ENCODE measurements at regions of chr15 and their contacts with region 1.

Region 1: GRCh38 chr15:57527382-57528091 is 64.2 kb upstream of the MYZAP start:
- DNase-seq: peak; percentile 13
- H3K4me3 Mint-ChIP-seq: no peak overlapping the region
- H3K27ac Mint-ChIP-seq: no peak overlapping the region
- H3K4me1 Mint-ChIP-seq: no peaks in the 10 kb centered on the region
- H3K27me3 Mint-ChIP-seq: no peaks in the 10 kb centered on the region

Region 2: GRCh38 chr15:56496635-56497034 is 1030.9 kb before region 1 on chr15:
- CTCF ChIA-PET with region 1: interaction called, 4 read pairs
- intact Hi-C with region 1: loop called (anchors 5 kb)
- DNase-seq: no peak
- H3K4me3 Mint-ChIP-seq: no peak overlapping the region
- H3K27ac Mint-ChIP-seq: no peak overlapping the region
- H3K4me1 Mint-ChIP-seq: peaks cover 1% of the 10 kb centered on the region
- H3K27me3 Mint-ChIP-seq: peaks cover 15% of the 10 kb centered on the region

Region 3: GRCh38 chr15:56821721-56822425 is 705.7 kb before region 1 on chr15:
- CTCF ChIA-PET with region 1: no interaction called
- intact Hi-C with region 1: loop called (anchors 5 kb)
- DNase-seq: peak; percentile 61
- H3K4me3 Mint-ChIP-seq: no peak overlapping the region
- H3K27ac Mint-ChIP-seq: no peak overlapping the region
- H3K4me1 Mint-ChIP-seq: no peaks in the 10 kb centered on the region
- H3K27me3 Mint-ChIP-seq: no peaks in the 10 kb centered on the region

Region 4: GRCh38 chr15:57146506-57147201 is 380.9 kb before region 1 on chr15:
- CTCF ChIA-PET with region 1: no interaction called
- intact Hi-C with region 1: loop called (anchors 1 kb)
- DNase-seq: no peak
- H3K4me3 Mint-ChIP-seq: no peak overlapping the region
- H3K27ac Mint-ChIP-seq: no peak overlapping the region
- H3K4me1 Mint-ChIP-seq: peaks cover 6% of the 10 kb centered on the region
- H3K27me3 Mint-ChIP-seq: no peaks in the 10 kb centered on the region

Region 5: DNA sequence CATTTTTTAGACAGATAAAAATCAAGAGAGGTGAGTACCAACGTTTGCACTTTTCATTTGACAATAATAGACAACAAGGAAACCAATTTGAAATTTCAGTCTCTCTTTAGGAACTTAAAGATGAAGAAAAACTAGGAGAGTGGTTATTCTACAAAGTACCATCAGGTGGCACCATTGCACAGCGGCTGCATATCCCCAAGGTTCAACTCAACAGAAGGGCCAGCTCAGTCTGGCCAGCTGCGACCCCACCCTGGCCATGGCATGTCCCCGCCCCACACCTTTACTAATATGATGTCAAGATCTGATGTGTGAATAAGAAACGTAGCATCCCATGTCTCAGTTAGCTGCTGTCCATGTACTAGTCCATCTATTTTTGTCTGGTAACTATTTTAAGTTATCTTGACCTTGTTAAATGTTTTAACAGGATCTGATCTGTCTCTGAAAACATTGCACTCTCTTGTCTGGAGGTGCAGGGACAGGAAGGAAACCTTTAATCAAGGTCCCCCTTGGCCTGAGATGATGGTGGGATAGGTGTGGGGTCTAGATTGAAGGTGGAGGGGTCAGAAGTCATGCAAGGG is 186.8 kb before region 1 on chr15:
- CTCF ChIA-PET with region 1: interaction called, 115 read pairs
- intact Hi-C with region 1: loop called (anchors 1 kb)
- DNase-seq: peak; percentile 52
- H3K4me3 Mint-ChIP-seq: no peak overlapping the region
- H3K27ac Mint-ChIP-seq: no peak overlapping the region
- H3K4me1 Mint-ChIP-seq: no peaks in the 10 kb centered on the region
- H3K27me3 Mint-ChIP-seq: peaks cover 2% of the 10 kb centered on the region

Region 6: GRCh38 chr15:57427367-57427821 is 100.1 kb before region 1 on chr15:
- CTCF ChIA-PET with region 1: no interaction called
- intact Hi-C with region 1: no loop called
- DNase-seq: no peak
- H3K4me3 Mint-ChIP-seq: no peak overlapping the region
- H3K27ac Mint-ChIP-seq: no peak overlapping the region
- H3K4me1 Mint-ChIP-seq: no peaks in the 10 kb centered on the region
- H3K27me3 Mint-ChIP-seq: peaks cover 2% of the 10 kb centered on the region

Region 7: DNA sequence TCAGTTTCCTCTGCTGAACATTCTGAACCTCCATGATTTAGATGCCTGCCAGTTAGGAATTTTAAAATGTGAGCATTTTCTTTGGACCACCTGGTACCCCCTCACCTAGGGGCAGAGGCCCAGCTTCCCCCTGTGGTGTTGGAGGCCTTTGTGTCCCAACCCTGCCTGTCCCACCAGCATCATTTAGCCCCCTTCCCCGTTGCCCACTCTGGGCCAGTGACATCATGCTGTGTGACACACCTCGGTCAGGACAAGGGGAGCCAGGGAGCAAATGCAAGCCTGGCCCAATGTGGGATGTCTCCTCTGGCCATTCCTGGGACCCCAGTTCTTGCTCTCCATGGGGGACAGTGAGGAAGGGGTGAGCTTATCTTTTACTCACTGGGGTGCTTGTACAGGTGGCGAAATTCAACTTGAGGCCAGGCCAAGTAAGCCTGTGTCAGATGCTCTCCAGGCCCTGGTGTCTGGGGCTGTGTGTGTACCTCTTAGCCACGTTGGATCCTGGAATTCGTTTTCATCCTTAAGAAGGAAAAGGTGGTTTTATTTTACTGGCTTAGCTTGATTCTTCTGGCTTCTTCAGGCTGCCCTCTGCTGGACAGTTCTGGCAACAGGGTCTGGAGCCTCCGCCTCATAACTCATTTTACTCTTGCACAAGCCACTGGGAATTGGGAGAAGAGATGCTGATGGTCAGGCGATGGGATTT is 14.4 kb after region 1 on chr15:
- CTCF ChIA-PET with region 1: interaction called, 12 read pairs
- intact Hi-C with region 1: no loop called
- DNase-seq: peak; percentile 61
- H3K4me3 Mint-ChIP-seq: no peak overlapping the region
- H3K27ac Mint-ChIP-seq: no peak overlapping the region
- H3K4me1 Mint-ChIP-seq: no peaks in the 10 kb centered on the region
- H3K27me3 Mint-ChIP-seq: peaks cover 2% of the 10 kb centered on the region